Vagina (tissue), 2 donors: ENCODE measurements at regions of chr13 and their contacts with region 1.

Region 1: DNA sequence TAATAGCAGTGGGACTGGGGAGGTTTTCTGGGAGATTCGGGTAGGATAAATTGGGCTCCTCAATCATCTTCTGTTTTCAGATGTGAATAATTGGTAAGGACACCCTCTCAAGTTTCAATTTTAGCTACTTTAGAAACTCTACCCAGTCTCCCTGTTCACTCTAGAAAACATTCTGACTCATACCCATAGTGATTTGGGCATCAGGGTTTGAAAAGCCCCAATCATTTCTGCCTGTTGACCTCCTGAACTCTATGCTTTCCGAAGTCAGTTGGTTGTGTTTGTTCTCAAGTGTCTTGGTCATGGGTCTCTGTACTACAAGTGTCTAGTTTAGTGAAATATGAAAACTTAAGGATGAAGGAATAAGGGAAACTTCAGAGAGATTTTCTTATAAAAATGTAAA is 911.3 kb upstream of the GPC6 start:
- DNase-seq: no peak
- H3K4me3 ChIP-seq: no peak overlapping the region
- H3K27ac ChIP-seq: no peak overlapping the region
- H3K4me1 ChIP-seq: no peaks in the 10 kb centered on the region
- H3K27me3 ChIP-seq: no peaks in the 10 kb centered on the region
- CTCF ChIP-seq: no peak
- POLR2A ChIP-seq: no peak

Region 2: DNA sequence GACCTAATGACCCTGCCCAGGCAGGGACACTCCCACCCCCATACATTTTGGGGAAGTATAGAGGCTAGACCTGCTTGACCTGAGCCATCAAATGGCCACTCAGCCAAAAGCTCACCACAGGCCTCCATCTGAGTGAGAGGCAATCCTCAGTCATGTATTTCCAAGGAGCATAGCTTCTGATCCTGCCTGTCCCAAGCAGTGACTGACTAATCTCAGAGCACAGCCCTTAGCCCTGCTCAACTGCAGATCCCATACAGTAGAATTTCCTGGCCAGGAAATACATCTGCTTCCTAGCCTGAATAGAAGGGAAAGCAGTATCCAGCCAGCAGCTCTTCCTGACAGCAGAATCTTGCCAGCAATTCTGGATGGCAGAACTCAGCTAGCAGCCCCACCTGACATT is 30.8 kb after region 1 on chr13:
- intact Hi-C with region 1: loop called (anchors 2 kb)
- DNase-seq: no peak
- H3K4me3 ChIP-seq: no peak overlapping the region
- H3K27ac ChIP-seq: no peak overlapping the region
- H3K4me1 ChIP-seq: no peaks in the 10 kb centered on the region
- H3K27me3 ChIP-seq: no peaks in the 10 kb centered on the region
- CTCF ChIP-seq: no peak
- POLR2A ChIP-seq: no peak

Region 3: DNA sequence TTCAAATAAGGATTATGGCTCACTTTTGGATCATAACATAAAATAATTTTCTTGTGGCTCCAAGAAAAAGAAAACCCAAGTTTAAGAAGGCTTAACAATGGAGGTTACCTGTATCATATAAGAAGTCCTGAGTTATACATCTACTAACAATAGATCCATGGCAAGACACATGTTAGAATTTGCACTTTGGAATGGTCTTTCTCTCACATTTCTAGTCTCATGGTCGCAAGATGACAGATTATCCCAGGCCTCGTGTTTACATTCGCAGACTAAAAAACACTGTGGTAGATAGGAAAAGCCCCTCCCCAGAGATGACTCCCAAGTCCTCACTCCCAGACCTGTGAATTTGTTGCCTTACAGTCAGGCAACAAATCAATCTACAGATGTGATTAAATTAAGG is 165.1 kb after region 1 on chr13:
- intact Hi-C with region 1: no loop called
- DNase-seq: no peak
- H3K4me3 ChIP-seq: no peak overlapping the region
- H3K27ac ChIP-seq: no peak overlapping the region
- H3K4me1 ChIP-seq: no peaks in the 10 kb centered on the region
- H3K27me3 ChIP-seq: no peaks in the 10 kb centered on the region
- CTCF ChIP-seq: no peak
- POLR2A ChIP-seq: no peak